ENCODE measurements at regions of chr20 and their contacts with region 1.

Region 1: GRCh38 chr20:33791959-33792597 is 19.1 kb upstream of the CHMP4B start:
- DNase-seq: peak; percentile 31 to 91
- H3K4me3 ChIP-seq: no peak overlapping the region
- H3K27ac ChIP-seq: no peak overlapping the region
- H3K4me1 ChIP-seq: peaks cover 0 to 7% (median 2%) of the 10 kb centered on the region in 4 experiments; a peak in 3 of 7 replicates
- H3K27me3 ChIP-seq: no peaks in the 10 kb centered on the region
- CTCF ChIP-seq: peak; percentile 84 to 92 (median 88)
- EP300 ChIP-seq: no peak
- POLR2A ChIP-seq: no peak
- RAD21 ChIP-seq: peak; percentile 86 to 88

Region 2: GRCh38 chr20:33370296-33370695 is 421.8 kb before region 1 on chr20:
- CTCF ChIA-PET with region 1: no interaction called
- POLR2A ChIA-PET with region 1: no interaction called
- DNase-seq: no peak
- H3K4me3 ChIP-seq: no peak overlapping the region
- H3K27ac ChIP-seq: no peak overlapping the region
- H3K4me1 ChIP-seq: no peaks in the 10 kb centered on the region
- H3K27me3 ChIP-seq: no peaks in the 10 kb centered on the region
- CTCF ChIP-seq: no peak
- EP300 ChIP-seq: no peak
- POLR2A ChIP-seq: no peak
- RAD21 ChIP-seq: no peak

Region 3: DNA sequence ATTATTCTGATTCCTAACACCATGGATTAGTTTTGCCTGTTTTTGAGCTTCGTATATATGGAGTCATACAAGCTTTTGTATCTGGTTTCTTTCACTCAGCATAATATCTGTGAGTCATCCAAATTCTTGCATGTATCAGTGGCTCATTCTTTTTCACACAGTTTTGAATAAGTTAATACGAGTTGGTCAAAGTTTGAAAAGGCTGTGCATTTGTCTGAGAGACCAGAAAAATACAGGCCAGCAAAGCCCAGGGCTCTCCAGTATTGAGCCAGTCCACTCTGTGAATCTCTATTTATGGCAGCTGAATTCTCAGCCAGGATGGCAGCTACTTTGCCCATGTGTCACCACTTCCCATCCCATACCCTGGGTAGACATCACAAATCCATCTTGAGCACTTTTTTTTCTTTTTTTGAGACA is 11.9 kb after region 1 on chr20:
- CTCF ChIA-PET with region 1: interaction called, 25 read pairs
- POLR2A ChIA-PET with region 1: no interaction called
- DNase-seq: no peak
- H3K4me3 ChIP-seq: no peak overlapping the region
- H3K27ac ChIP-seq: no peak overlapping the region
- H3K4me1 ChIP-seq: no peaks in the 10 kb centered on the region
- H3K27me3 ChIP-seq: peaks cover 0 to 3% (median 0%) of the 10 kb centered on the region in 4 experiments; a peak in 1 of 7 replicates
- CTCF ChIP-seq: no peak
- EP300 ChIP-seq: no peak
- POLR2A ChIP-seq: no peak
- RAD21 ChIP-seq: no peak

Region 4: DNA sequence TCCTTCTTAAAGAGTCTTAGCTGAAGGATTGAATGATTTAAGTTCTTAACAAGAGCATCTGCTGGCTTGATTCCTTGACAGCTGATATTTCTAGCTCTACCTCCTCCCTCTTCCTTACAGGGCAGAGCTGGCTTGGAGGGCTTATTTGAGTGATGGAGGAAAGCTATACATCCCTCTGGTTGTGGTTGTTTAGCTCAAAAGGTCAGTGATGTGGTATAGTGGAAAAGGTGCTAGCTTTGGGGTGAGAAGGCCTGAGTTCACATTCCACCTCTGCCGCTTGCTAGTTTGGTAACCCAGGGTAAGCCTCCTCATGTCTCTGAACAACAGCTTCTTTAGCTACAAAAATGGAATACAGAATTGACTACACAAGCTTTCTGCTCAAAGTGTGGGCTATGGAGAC is 27.4 kb after region 1 on chr20:
- CTCF ChIA-PET with region 1: interaction called, 17 read pairs
- POLR2A ChIA-PET with region 1: no interaction called
- DNase-seq: no peak
- H3K4me3 ChIP-seq: no peak overlapping the region
- H3K27ac ChIP-seq: no peak overlapping the region
- H3K4me1 ChIP-seq: no peaks in the 10 kb centered on the region
- H3K27me3 ChIP-seq: no peaks in the 10 kb centered on the region
- CTCF ChIP-seq: no peak
- EP300 ChIP-seq: no peak
- POLR2A ChIP-seq: no peak
- RAD21 ChIP-seq: no peak

Region 5: DNA sequence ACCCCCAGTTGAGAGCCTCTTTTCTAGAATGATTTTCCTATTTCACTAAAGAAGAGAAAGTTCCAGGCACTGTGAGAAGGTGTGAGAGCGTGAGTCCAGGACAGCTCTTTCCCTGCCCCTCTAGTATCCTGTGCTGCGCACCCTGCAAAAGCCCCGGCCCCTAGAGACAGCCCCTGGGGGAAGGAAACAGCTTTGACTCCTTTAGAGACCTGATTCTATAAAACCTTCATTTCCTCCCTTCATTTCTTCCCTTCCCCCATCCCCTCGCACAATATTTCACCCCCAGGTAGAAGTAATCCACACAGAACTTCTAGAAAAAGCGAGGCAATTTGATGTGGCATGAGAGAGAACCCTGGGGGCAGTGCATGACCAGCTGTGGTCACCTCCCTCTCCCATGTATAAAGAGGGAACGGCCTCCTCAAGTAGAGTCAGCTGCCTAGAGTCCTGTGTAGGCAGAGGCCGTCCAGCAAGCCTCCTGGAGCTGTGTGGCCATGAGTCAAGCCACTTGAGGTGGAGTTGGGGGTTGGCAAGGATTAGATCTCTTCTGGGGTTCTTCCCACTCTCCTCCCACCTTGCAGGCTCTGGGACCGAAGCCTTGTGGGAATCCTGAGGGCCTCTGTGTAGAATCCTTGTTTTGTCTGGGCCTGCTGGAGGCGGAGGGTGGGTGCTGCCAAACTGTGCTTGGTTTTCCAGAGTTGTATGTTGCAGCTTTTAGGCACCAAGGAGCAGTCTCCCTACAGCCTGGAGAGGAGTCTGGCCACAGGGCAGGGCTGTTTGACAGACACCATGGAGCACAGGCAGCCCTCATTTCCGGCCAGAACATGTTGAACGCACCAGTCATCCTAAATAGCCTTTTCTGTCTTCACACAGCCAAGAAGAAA is 60.8 kb after region 1 on chr20:
- CTCF ChIA-PET with region 1: interaction called, 51 read pairs
- POLR2A ChIA-PET with region 1: no interaction called
- DNase-seq: no peak
- H3K4me3 ChIP-seq: no peak overlapping the region
- H3K27ac ChIP-seq: no peak overlapping the region
- H3K4me1 ChIP-seq: no peaks in the 10 kb centered on the region
- H3K27me3 ChIP-seq: no peaks in the 10 kb centered on the region
- CTCF ChIP-seq: no peak
- EP300 ChIP-seq: no peak
- POLR2A ChIP-seq: no peak
- RAD21 ChIP-seq: no peak

Region 6: DNA sequence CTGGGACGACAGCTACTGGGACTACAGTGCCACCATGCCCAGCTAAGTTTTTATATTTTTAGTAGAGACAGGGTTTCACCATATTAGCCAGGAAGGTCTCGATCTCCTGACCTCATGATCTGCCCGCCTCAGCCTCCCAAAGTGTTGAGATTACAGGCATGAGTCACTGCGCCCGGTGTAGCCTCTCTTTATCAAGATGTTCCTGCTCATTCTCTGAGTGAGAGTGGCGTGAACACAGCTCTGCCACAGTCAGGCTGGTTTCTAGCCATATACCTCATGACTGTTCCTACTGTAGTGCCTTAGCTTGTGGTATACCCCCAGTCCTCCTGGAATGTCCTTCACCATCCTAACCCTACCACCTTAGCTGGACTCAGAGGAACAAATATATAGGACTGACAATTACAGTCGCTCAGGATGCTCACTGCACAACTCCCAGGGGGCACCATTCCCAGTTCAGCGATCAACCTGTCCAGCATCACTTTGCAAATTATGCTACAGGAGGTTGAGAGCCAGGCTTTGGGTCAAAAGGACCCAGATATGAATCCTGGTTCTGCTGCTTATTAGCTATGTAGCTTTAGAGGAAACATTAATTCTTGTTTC is 105.3 kb after region 1 on chr20:
- CTCF ChIA-PET with region 1: interaction called, 14 read pairs
- POLR2A ChIA-PET with region 1: no interaction called
- DNase-seq: no peak
- H3K4me3 ChIP-seq: no peak overlapping the region
- H3K27ac ChIP-seq: no peak overlapping the region
- H3K4me1 ChIP-seq: peaks cover 0 to 1% (median 0%) of the 10 kb centered on the region in 4 experiments; a peak in 2 of 7 replicates
- H3K27me3 ChIP-seq: no peaks in the 10 kb centered on the region
- CTCF ChIP-seq: peak; percentile 20 to 43 (median 42); a peak in 3 of 4 replicates
- EP300 ChIP-seq: no peak
- POLR2A ChIP-seq: no peak
- RAD21 ChIP-seq: 0 out of 4 replicates have a peak, but pooled peaks of 1 of the 2 experiments have one; percentile 3